B cell (primary cell): ENCODE measurements at regions of chrX and their contacts with region 1.

Region 1: GRCh38 chrX:46573331-46573891 is at the start of gene CHST7:
- DNase-seq: peak; percentile 68
- ATAC-seq: peak; percentile 74
- H3K4me3 ChIP-seq: peak within 1 kb of the TSS; percentile 33 to 64 (median 57)
- H3K4me3 Mint-ChIP-seq: peak within 1 kb of the TSS; percentile 82
- H3K27ac ChIP-seq: peak within 1 kb of the TSS; percentile 22 to 48
- H3K27ac Mint-ChIP-seq: peak within 1 kb of the TSS; percentile 89
- H3K4me1 ChIP-seq: peaks cover 17 to 35% of the 10 kb centered on the region in 2 donors
- H3K4me1 Mint-ChIP-seq: peaks cover 37% of the 10 kb centered on the region
- H3K27me3 ChIP-seq: peaks cover 0 to 5% (median 0%) of the 10 kb centered on the region in 4 experiments
- H3K27me3 Mint-ChIP-seq: no peaks in the 10 kb centered on the region
- CTCF ChIP-seq: no peak
- total RNA-seq, gene CHST7: 2.6 and 2.7 TPM in 2 replicates

Region 2: DNA sequence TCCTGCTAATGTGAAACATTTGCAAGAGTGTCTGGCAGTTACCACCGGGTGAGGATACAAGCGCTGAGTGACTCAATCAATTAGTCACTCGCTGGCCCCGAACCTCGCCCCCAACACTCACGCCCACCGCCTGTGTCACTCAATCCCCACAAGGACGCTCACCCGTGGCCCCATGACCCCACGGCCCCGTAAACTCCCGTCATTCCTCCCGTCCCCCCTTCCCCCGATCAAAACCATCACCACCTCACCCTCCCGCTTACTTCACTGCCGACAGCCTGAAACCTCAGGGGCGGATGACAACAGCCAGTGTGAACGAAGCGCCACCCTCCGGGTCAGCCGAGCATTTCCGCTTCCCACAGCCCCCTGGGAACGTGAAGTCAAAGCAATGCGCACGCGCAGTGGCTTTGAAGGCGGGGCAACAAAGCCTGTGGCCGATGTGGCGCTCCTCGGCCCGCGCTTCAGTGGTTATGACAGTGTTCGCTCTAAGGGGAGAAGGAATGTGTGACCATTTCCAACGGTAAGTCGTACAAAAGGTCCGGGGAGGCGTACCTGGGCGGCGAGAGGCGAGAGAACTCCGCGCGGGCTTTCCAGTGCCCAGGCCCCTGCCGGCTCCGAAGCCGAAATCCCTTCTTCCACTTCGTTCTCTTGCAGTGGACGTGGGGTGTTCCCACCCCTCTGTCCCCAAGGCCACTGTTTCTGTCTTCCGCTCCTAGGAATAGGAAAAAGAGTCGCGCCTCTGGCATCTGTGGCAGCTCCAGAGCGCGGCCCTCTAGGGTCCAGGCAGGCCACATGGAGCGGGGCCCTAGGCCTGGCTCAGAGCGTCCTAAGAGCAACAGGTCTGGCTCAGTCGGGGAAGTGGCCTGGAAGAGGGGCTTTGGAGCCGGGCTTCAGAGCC is 28.1 kb before region 1 on chrX and contains the start of gene ZNF674:
- CTCF ChIA-PET with region 1: no interaction called
- POLR2A ChIA-PET with region 1: no interaction called
- intact Hi-C with region 1: loop called (anchors 1 kb)
- DNase-seq: peak; percentile 93
- ATAC-seq: peak; percentile 93
- H3K4me3 ChIP-seq: peak within 1 kb of the TSS; percentile 46 to 81 (median 76)
- H3K4me3 Mint-ChIP-seq: peak within 1 kb of the TSS; percentile 92
- H3K27ac ChIP-seq: peak within 1 kb of the TSS; percentile 64 to 81
- H3K27ac Mint-ChIP-seq: peak within 1 kb of the TSS; percentile 95
- H3K4me1 ChIP-seq: peaks cover 5 to 17% of the 10 kb centered on the region in 2 donors
- H3K4me1 Mint-ChIP-seq: peaks cover 28% of the 10 kb centered on the region
- H3K27me3 ChIP-seq: no peaks in the 10 kb centered on the region
- H3K27me3 Mint-ChIP-seq: no peaks in the 10 kb centered on the region
- CTCF ChIP-seq: no peak
- total RNA-seq, gene ZNF674: 2.3 and 3.3 TPM in 2 replicates

Region 3: DNA sequence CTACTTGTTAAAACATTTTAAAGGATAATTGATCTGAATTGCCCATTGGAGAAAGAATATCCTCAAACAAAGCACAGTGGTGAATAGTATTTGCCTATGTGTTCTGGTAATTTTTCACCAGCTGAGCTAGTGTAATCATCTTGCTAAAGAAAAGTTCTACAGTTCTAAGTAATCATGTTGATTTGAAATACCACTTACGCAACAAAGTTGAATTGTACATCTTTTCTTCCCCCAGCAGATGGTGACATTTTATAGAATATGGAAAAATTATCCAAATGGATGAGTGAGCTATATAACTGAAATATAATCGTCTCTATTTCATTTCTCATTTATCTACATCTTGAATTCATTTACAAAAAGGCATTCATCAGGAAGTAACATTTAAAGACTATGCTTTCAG is 18.5 kb before region 1 on chrX:
- CTCF ChIA-PET with region 1: interaction called, 12 read pairs
- POLR2A ChIA-PET with region 1: no interaction called
- intact Hi-C with region 1: no loop called
- DNase-seq: no peak
- ATAC-seq: no peak
- H3K4me3 ChIP-seq: no peak overlapping the region
- H3K4me3 Mint-ChIP-seq: no peak overlapping the region
- H3K27ac ChIP-seq: no peak overlapping the region
- H3K27ac Mint-ChIP-seq: no peak overlapping the region
- H3K4me1 ChIP-seq: no peaks in the 10 kb centered on the region
- H3K4me1 Mint-ChIP-seq: no peaks in the 10 kb centered on the region
- H3K27me3 ChIP-seq: no peaks in the 10 kb centered on the region
- H3K27me3 Mint-ChIP-seq: peaks cover 13% of the 10 kb centered on the region
- CTCF ChIP-seq: no peak

Region 4: GRCh38 chrX:46561824-46562657 is 11.4 kb before region 1 on chrX:
- CTCF ChIA-PET with region 1: interaction called, 14 read pairs
- POLR2A ChIA-PET with region 1: interaction called, 9 read pairs
- intact Hi-C with region 1: loop called (anchors 1 kb)
- DNase-seq: peak; percentile 64
- ATAC-seq: peak; percentile 97
- H3K4me3 ChIP-seq: no peak overlapping the region
- H3K4me3 Mint-ChIP-seq: peak overlapping the region; percentile 20
- H3K27ac ChIP-seq: no peak overlapping the region
- H3K27ac Mint-ChIP-seq: peak overlapping the region; percentile 59
- H3K4me1 ChIP-seq: peaks cover 14 to 15% of the 10 kb centered on the region in 2 donors
- H3K4me1 Mint-ChIP-seq: peaks cover 17% of the 10 kb centered on the region
- H3K27me3 ChIP-seq: peaks cover 0 to 3% (median 0%) of the 10 kb centered on the region in 4 experiments
- H3K27me3 Mint-ChIP-seq: peaks cover 27% of the 10 kb centered on the region
- CTCF ChIP-seq: no peak

Region 5: GRCh38 chrX:46628460-46629371 is 55.3 kb after region 1 on chrX:
- CTCF ChIA-PET with region 1: interaction called, 3 read pairs
- POLR2A ChIA-PET with region 1: interaction called, 4 read pairs
- intact Hi-C with region 1: loop called (anchors 5 kb)
- DNase-seq: peak; percentile 58
- ATAC-seq: peak; percentile 64
- H3K4me3 ChIP-seq: no peak overlapping the region
- H3K4me3 Mint-ChIP-seq: peak overlapping the region; percentile 51
- H3K27ac ChIP-seq: peak overlapping the region; percentile 43 to 72
- H3K27ac Mint-ChIP-seq: peak overlapping the region; percentile 89
- H3K4me1 ChIP-seq: peaks cover 34 to 37% of the 10 kb centered on the region in 2 donors
- H3K4me1 Mint-ChIP-seq: peaks cover 40% of the 10 kb centered on the region
- H3K27me3 ChIP-seq: no peaks in the 10 kb centered on the region
- H3K27me3 Mint-ChIP-seq: no peaks in the 10 kb centered on the region
- CTCF ChIP-seq: no peak

Region 6: DNA sequence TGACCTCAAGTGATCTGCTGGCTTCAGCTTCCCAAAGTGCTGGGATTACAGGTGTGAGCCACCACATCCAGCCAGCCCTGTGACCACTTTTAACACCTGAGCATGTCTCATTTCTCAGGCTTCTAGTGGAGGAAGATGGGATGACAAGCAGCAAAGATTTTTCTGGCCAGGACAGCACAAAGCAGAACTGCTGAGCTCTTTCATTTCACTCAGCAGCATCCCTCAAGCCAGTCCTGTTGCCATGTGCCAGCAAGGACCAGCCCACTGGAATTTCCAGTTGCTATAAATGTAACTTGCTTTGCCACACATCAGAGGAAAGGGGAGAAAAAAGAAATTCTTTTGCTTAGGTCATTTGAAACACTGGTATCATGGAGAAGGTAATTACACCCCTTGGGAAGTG is 109.6 kb after region 1 on chrX:
- CTCF ChIA-PET with region 1: no interaction called
- POLR2A ChIA-PET with region 1: no interaction called
- intact Hi-C with region 1: no loop called
- DNase-seq: no peak
- ATAC-seq: no peak
- H3K4me3 ChIP-seq: no peak overlapping the region
- H3K4me3 Mint-ChIP-seq: no peak overlapping the region
- H3K27ac ChIP-seq: no peak overlapping the region
- H3K27ac Mint-ChIP-seq: peak overlapping the region; percentile 26
- H3K4me1 ChIP-seq: no peaks in the 10 kb centered on the region
- H3K4me1 Mint-ChIP-seq: peaks cover 50% of the 10 kb centered on the region
- H3K27me3 ChIP-seq: no peaks in the 10 kb centered on the region
- H3K27me3 Mint-ChIP-seq: no peaks in the 10 kb centered on the region
- CTCF ChIP-seq: no peak

Region 7: GRCh38 chrX:46803140-46803539 is 229.7 kb after region 1 on chrX:
- CTCF ChIA-PET with region 1: no interaction called
- POLR2A ChIA-PET with region 1: no interaction called
- intact Hi-C with region 1: no loop called
- DNase-seq: peak; percentile 2
- ATAC-seq: no peak
- H3K4me3 ChIP-seq: no peak overlapping the region
- H3K4me3 Mint-ChIP-seq: no peak overlapping the region
- H3K27ac ChIP-seq: no peak overlapping the region
- H3K27ac Mint-ChIP-seq: no peak overlapping the region
- H3K4me1 ChIP-seq: no peaks in the 10 kb centered on the region
- H3K4me1 Mint-ChIP-seq: no peaks in the 10 kb centered on the region
- H3K27me3 ChIP-seq: no peaks in the 10 kb centered on the region
- H3K27me3 Mint-ChIP-seq: no peaks in the 10 kb centered on the region
- CTCF ChIP-seq: no peak

Region 8: DNA sequence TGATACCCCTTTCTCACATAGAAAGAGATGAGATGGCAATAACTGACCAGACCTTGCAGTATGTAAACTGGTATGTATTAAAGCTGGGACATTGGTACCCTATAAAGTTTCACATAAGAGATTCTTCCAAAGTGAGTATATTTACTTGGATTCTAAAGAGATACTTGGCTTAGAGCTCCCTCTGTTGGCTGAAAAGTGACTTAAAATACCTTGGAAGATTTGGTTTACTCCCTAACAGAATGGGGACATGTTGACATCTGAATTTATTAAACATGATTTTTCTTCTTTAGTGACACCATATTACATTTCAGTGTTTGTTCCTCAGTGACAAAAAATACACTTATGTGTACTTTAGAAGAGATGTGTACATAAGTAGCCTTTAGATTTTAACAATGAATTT is 456.9 kb after region 1 on chrX:
- CTCF ChIA-PET with region 1: no interaction called
- POLR2A ChIA-PET with region 1: no interaction called
- intact Hi-C with region 1: loop called (anchors 2 kb)
- DNase-seq: peak; percentile 69
- ATAC-seq: no peak
- H3K4me3 ChIP-seq: no peak overlapping the region
- H3K4me3 Mint-ChIP-seq: no peak overlapping the region
- H3K27ac ChIP-seq: no peak overlapping the region
- H3K27ac Mint-ChIP-seq: no peak overlapping the region
- H3K4me1 ChIP-seq: no peaks in the 10 kb centered on the region
- H3K4me1 Mint-ChIP-seq: peaks cover 7% of the 10 kb centered on the region
- H3K27me3 ChIP-seq: no peaks in the 10 kb centered on the region
- H3K27me3 Mint-ChIP-seq: no peaks in the 10 kb centered on the region
- CTCF ChIP-seq: peak; percentile 73